Posterior cingulate gyrus (tissue), 11 donors: ENCODE measurements at regions of chr7 and their contacts with region 1.

Region 1: GRCh38 chr7:12638851-12639467 is 48.5 kb upstream of the ARL4A start:
- DNase-seq: no peak

Region 2: GRCh38 chr7:13262929-13263530 is 624.1 kb after region 1 on chr7:
- intact Hi-C with region 1: loop called (anchors 2 kb)
- DNase-seq: no peak